ENCODE measurements at regions of chr9 and their contacts with region 1.

Region 1: GRCh38 chr9:92764988-92765936 is 629 bp upstream of the BICD2 start:
- DNase-seq: peak; percentile 99
- ATAC-seq: peak; percentile 97

Region 2: GRCh38 chr9:92325269-92325990 is 439.8 kb before region 1 on chr9 and contains the starts of genes CENPP and NOL8:
- intact Hi-C with region 1: loop called (anchors 10 kb)
- DNase-seq: peak; percentile 93
- ATAC-seq: peak; percentile 98
- total RNA-seq, gene CENPP: 3.3 TPM
- total RNA-seq, gene NOL8: 14.2 TPM

Region 3: GRCh38 chr9:92669890-92670708 is 95.2 kb before region 1 on chr9 and contains the start of gene IPPK:
- intact Hi-C with region 1: loop called (anchors 2 kb)
- DNase-seq: peak; percentile 100
- ATAC-seq: peak; percentile 96
- total RNA-seq, gene IPPK: 5.9 TPM

Region 4: DNA sequence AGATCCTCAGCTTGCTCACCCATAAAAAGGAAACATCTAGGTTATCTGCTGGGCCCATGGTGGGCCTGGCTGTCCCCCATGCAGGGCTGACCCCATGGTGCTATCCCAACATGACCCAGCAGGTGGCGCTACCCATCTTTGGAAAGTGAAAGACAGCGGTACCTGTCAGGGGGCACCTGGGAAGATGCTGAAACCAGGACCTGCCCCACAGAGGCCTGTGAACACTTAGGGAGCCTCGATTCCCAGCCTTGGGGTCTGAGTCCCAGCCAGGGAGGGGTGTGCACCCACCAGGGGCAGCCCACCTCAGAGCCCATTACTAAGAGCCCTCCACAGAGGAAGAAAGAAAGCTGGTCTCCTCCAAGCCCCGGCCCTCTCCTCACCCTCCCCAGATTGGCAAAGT is 48.7 kb before region 1 on chr9:
- intact Hi-C with region 1: loop called (anchors 2 kb)
- DNase-seq: no peak
- ATAC-seq: peak; percentile 52

Region 5: DNA sequence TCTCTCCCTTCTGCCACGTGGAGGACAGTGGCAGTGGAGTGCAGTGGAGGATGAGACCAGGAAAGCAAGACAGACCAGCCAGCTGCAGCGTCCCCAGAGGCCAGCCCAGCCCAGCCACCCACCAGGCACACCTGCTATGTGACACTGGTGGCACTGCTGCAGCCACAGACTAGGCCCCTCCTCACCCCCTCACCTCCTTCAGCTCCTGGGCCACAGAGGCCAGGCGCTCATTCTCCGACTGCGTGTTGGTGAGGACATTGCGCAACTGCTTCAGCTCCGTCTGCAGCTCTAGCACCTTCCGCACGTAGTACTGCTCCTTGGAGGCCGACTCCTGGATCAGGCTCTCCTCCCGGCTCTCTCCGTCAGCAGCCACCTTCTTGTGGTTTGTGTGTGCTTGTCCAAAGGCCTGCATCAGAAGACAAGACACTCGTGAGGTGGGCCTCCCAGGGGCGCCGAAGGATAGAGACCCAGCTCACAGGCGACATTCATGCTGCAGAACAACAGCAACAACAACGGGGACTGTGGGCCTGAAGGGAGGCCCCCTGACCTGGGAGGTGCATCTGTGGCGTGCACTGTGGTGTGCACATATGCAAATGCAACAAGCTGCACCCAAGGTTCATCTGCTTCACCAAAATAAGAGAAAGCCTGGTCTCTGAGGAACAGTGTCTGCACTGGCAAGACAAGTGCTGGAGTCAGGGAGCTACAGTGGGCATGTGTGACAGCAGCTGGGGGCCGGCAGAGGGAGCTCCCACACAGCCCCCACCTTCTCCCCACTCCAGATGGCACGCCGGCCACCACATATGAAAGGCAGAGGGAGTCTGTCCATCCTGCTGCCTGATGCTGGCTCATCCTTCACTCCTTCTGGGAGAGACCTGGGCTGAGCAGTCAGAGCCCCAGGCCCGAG is 36.2 kb before region 1 on chr9:
- intact Hi-C with region 1: loop called (anchors 2 kb)
- DNase-seq: peak; percentile 69
- ATAC-seq: peak; percentile 47

Region 6: DNA sequence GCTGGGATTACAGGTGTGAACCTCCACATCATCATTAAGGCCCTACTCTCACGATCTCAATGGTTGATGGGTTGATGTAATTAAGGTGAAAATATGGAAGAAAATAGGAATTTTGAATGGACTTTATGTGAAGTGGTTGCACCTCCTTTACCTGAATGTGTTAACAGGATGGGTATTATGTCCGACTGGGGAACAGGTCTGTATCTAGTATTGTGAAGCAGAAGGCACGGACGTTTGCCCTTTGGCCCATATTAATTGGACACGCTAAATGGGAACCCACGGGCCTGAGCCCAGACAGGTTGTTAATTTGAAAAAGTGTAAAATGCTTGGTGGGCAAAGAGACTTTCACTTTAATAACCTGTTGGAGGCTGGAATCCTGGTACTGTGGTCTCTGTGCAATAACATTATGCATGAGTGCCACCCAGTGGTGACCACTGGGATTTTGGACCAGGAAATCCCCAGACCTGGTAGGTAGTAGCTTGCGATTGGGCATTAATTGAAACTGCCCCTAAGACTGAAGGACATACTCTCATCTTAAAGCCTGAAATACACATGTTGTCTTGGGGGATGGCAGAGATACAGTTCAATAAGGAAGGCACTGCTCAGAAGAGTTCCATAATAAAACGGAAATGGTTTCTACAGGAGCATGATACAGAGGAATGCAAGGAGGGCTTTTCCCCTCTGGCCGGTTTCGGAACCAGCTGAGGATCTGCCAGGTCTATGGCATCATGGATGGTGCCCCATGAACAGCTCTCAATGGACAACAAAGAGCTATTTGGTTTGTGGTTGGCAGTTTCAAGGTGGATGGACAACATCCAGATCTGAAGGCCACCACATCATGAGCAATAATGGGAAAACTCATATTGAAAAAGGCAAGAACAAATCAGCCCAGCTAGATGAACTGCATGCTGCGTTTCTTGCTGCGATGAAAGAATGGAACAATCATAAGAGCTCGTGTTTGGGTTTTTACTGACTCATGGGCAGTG is 25.6 kb after region 1 on chr9:
- intact Hi-C with region 1: loop called (anchors 2 kb)
- DNase-seq: peak; percentile 72
- ATAC-seq: peak; percentile 94

Measured in Right ventricle myocardium inferior (tissue), 1 donor.